Activated T-helper 1 cell treated with anti-CD3 and anti-CD28 coated beads, Interleukin-12 subunit alpha, Interleukin-12 subunit beta, Interleukin-2, Interleukin-4 antibody, amounts not matched to agents 30 ng/mL and 10 ng/mL and 1 ng/mL, durations not matched to agents 14 hours and 24 hours and 36 hours (primary cell): ENCODE measurements at regions of chr6 and their contacts with region 1.

Region 1: GRCh38 chr6:399785-400534 is 8.4 kb downstream of the IRF4 start:
- DNase-seq: peak; percentile 40
- H3K4me3 Mint-ChIP-seq: peak overlapping the region; percentile 79
- H3K27ac Mint-ChIP-seq: peak overlapping the region; percentile 56
- H3K4me1 Mint-ChIP-seq: peaks cover 93% of the 10 kb centered on the region
- H3K27me3 Mint-ChIP-seq: no peaks in the 10 kb centered on the region

Region 2: GRCh38 chr6:411421-412145 is 11.6 kb after region 1 on chr6:
- intact Hi-C with region 1: loop called (anchors 1 kb)
- DNase-seq: no peak
- H3K4me3 Mint-ChIP-seq: no peak overlapping the region
- H3K27ac Mint-ChIP-seq: peak overlapping the region; percentile 40
- H3K4me1 Mint-ChIP-seq: peaks cover 64% of the 10 kb centered on the region
- H3K27me3 Mint-ChIP-seq: no peaks in the 10 kb centered on the region

Region 3: DNA sequence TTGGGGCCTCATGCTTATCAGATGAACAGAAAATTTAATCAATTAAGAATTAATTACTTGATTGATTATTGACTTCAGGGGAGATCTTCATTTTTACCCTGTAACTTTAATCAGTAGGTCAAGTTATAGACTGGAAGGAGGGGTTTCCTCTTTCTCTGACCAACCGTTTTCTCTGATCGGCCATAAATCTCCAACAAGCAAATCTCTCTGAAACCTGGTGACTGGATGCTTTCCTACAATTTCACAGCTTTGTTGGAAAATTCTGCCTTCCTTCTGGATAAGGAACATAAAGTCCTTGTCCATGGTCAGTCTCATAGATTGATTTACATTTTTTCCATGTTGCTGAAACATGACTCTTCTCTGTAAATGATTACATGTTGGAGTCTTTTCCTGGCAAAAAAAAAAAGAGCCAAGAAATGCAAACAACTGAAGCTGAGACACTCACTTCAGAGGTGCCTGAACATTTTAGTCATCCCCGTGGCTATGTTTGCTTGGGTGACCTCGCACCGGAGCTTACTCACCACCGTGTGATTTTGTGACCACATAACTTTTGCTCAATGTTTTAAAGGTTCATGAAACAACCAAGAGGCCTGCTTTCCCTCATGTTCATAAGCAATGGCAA is 22.6 kb after region 1 on chr6:
- intact Hi-C with region 1: loop called (anchors 1 kb)
- DNase-seq: peak; percentile 67
- H3K4me3 Mint-ChIP-seq: no peak overlapping the region
- H3K27ac Mint-ChIP-seq: peak overlapping the region; percentile 52
- H3K4me1 Mint-ChIP-seq: peaks cover 39% of the 10 kb centered on the region
- H3K27me3 Mint-ChIP-seq: no peaks in the 10 kb centered on the region

Region 4: GRCh38 chr6:431986-432385 is 32.0 kb after region 1 on chr6:
- intact Hi-C with region 1: loop called (anchors 1 kb)
- DNase-seq: peak; percentile 70
- H3K4me3 Mint-ChIP-seq: peak overlapping the region; percentile 61
- H3K27ac Mint-ChIP-seq: peak overlapping the region; percentile 60
- H3K4me1 Mint-ChIP-seq: peaks cover 85% of the 10 kb centered on the region
- H3K27me3 Mint-ChIP-seq: no peaks in the 10 kb centered on the region

Region 5: DNA sequence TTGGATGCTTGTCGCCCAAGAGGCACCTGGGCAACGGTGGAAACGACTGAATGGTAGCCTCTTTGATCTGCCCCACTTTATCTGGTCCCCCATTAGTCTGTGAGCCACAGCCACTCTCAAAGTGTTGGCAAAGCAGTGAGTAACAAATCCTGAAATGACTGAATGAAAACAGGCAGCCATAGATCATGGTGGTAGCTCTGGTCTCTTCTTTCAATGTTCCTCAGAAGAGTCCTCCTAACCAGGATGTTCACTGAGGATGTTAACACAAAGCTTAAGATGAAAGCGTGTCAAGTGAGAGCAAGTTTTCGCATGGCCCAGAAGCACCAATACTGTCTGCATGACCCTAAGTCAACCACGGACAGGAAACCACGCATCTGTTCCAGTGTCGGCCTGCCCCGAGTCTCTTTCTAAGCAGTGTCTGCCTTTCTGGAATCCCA is 98.9 kb after region 1 on chr6:
- intact Hi-C with region 1: no loop called
- DNase-seq: peak; percentile 56
- H3K4me3 Mint-ChIP-seq: peak overlapping the region; percentile 80
- H3K27ac Mint-ChIP-seq: peak overlapping the region; percentile 94
- H3K4me1 Mint-ChIP-seq: peaks cover 87% of the 10 kb centered on the region
- H3K27me3 Mint-ChIP-seq: no peaks in the 10 kb centered on the region

Region 6: GRCh38 chr6:548517-548916 is 148.6 kb after region 1 on chr6:
- intact Hi-C with region 1: loop called (anchors 2 kb)
- DNase-seq: peak; percentile 43
- H3K4me3 Mint-ChIP-seq: peak overlapping the region; percentile 72
- H3K27ac Mint-ChIP-seq: peak overlapping the region; percentile 95
- H3K4me1 Mint-ChIP-seq: peaks cover 75% of the 10 kb centered on the region
- H3K27me3 Mint-ChIP-seq: no peaks in the 10 kb centered on the region

Region 7: DNA sequence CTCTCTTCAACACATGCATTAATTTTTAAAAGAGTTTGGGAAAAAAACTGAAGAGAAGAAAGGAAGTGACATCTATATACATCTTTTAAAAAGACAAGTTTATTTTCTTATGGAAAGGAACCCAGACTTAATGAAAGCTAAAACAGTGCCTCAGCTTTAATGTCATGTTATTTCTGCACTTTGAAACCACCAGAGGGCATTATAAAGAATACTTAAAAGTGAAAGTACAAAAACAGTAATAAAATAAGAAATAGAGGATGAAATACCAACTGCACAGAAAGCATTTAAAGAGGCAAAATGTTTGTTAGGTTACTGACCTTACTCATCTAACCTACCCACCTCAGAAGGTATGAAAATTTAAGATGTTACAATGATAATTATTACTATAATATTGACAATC is 158.1 kb after region 1 on chr6:
- intact Hi-C with region 1: loop called (anchors 2 kb)
- DNase-seq: no peak
- H3K4me3 Mint-ChIP-seq: no peak overlapping the region
- H3K27ac Mint-ChIP-seq: peak overlapping the region; percentile 55
- H3K4me1 Mint-ChIP-seq: peaks cover 50% of the 10 kb centered on the region
- H3K27me3 Mint-ChIP-seq: no peaks in the 10 kb centered on the region

Region 8: DNA sequence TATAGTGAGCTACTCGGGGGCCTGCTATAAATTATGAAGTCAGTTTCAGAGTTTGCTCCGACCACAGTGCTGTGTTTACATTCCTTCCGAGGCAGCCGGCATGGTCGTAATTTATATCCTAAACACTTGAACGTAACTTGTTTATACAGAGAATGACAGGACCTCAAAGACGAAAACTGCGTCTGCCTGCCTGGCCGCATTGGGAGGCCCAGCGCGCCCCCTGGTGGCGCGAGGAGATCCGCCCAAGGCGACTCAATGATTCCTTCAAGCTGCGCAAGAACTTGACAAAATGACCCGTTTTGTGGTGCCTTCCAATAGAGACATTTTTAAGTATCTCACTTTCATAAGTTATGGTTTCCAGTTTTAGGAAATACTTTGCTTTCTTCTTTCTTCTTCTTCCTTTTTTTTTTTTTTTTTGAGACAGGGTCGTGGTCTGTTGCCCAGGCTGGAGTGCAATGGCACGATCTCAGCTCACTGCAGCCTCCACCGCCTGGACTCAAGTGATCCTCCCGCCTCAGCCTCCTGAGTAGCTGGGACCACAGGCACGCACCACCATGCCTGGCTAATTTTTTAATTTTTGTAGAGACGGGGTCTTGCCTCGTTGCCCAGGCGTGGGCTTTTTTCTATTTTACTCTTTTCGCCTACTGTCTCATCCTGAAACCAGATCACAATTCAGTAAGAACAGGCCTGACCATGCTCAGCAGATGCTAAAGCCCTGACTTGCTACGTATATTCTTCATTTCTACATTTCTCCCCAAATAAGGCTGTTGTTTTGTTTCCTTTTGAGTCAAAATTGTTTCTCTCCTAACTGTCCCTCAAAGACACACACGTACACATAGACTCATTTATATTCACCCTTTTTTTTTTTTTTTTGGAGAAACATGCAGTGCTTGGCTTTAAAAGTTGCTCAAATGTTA is 997.2 kb after region 1 on chr6:
- intact Hi-C with region 1: loop called (anchors 5 kb)
- DNase-seq: peak; percentile 42
- H3K4me3 Mint-ChIP-seq: no peak overlapping the region
- H3K27ac Mint-ChIP-seq: no peak overlapping the region
- H3K4me1 Mint-ChIP-seq: peaks cover 5% of the 10 kb centered on the region
- H3K27me3 Mint-ChIP-seq: peaks cover 53% of the 10 kb centered on the region